ENCODE measurements at regions of chr2 and their contacts with region 1.

Region 1: GRCh38 chr2:42095923-42096408 is 48.1 kb downstream of the PKDCC start:
- DNase-seq: no peak
- CTCF ChIP-seq: peak; percentile 59

Region 2: DNA sequence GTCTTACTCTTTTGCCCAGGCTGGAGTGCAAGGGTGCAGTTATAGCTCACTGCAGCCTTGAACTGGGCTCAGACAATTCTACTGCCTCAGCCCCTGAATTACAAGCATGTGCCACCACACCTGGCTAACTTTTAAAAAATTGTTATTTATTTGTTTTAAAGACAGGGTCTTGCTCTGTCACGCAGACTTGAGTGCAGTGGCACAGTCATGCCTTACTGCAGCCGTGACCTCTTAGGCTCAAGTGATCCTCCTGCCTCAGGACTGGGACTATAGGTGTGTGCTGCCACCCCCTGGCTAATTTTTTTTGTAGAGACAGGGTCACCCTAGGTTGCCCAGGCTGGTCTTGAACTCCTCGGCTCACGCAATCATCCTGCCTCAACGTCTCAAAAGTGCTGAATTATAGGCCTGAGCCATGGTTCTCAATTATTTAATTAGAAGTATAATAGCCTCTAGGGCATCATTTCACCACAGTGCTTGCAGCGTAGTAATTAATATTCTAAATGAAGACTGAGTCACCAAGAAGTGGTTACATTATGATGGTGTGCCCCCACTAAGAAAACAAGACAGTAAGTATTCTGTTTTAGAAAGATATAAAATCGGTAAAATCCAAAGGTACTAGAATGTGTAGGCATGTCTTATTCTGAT is 142.8 kb after region 1 on chr2:
- in situ Hi-C with region 1: loop called (anchors 5 kb)
- DNase-seq: no peak
- CTCF ChIP-seq: peak; percentile 29

Region 3: DNA sequence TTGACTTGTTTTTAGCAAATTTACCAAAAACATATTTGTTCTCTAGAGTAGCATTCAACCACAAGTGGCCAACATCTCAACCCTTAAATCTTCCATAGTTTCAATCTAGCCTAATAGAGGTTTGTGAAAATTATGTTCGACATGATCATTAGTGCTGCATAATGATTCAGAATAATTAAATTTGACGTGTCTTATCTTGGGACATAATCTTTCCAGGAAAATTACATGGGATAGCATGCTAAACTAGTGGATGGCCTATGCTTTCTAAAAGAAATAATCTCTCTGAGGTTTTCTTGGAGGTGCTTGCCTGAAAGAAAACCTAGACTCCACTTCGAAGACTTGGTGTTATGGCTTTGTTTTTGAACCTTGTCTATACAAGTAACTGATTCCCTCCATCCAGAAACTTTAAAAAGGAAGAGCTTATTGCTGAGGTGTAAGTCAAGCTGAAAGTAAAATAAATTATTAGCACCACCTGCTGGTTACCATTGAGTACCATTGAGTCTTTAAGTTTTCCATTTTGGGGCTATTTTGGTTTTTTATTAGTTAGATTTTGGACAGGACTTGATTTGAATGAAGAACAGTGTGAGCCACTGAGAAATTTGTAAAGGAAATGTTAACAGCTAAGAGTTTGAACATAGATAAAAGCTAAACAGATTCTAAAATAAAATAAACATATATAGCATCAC is 232.3 kb after region 1 on chr2:
- in situ Hi-C with region 1: loop called (anchors 10 kb)
- DNase-seq: no peak
- CTCF ChIP-seq: peak; percentile 14

Measured in GM13976 (cell line).